MCF 10A (cell line): ENCODE measurements at regions of chr6 and their contacts with region 1.

Region 1: GRCh38 chr6:79167931-79168694 is 66.4 kb downstream of the HMGN3 start:
- DNase-seq: peak; percentile 8
- H3K4me3 Mint-ChIP-seq: no peak overlapping the region
- H3K27ac Mint-ChIP-seq: no peak overlapping the region
- H3K4me1 Mint-ChIP-seq: peaks cover 18% of the 10 kb centered on the region
- H3K27me3 Mint-ChIP-seq: no peaks in the 10 kb centered on the region
- CTCF ChIP-seq: no peak

Region 2: DNA sequence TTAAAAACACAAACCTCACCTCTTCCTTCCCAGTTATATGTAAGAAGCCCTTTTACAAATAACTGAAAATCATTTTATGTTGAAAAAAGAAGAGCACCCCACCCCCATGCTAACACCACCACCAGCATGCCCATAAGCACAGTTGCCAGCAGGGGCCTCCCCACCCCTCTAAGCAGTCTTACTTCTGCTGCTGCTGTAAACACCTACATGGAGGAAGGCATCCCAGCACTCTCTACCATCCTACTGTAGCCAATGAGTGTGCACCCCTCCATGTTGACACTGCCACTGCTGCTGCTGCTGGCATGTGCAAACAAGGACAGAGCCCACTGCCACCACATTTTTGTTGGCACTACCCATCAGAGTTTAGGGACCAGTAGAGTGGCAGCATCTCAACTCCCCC is 40.5 kb before region 1 on chr6:
- CTCF ChIA-PET with region 1: no interaction called
- POLR2A ChIA-PET with region 1: no interaction called
- intact Hi-C with region 1: loop called (anchors 1 kb)
- DNase-seq: no peak
- H3K4me3 Mint-ChIP-seq: no peak overlapping the region
- H3K27ac Mint-ChIP-seq: no peak overlapping the region
- H3K4me1 Mint-ChIP-seq: no peaks in the 10 kb centered on the region
- H3K27me3 Mint-ChIP-seq: no peaks in the 10 kb centered on the region
- CTCF ChIP-seq: no peak